Activated CD4-positive, alpha-beta T cell treated with anti-CD3 and anti-CD28 coated beads, Interleukin-2, amount 10 ng/mL, durations not matched to agents 24 days and 14 days (primary cell): ENCODE measurements at regions of chr2 and their contacts with region 1.

Region 1: DNA sequence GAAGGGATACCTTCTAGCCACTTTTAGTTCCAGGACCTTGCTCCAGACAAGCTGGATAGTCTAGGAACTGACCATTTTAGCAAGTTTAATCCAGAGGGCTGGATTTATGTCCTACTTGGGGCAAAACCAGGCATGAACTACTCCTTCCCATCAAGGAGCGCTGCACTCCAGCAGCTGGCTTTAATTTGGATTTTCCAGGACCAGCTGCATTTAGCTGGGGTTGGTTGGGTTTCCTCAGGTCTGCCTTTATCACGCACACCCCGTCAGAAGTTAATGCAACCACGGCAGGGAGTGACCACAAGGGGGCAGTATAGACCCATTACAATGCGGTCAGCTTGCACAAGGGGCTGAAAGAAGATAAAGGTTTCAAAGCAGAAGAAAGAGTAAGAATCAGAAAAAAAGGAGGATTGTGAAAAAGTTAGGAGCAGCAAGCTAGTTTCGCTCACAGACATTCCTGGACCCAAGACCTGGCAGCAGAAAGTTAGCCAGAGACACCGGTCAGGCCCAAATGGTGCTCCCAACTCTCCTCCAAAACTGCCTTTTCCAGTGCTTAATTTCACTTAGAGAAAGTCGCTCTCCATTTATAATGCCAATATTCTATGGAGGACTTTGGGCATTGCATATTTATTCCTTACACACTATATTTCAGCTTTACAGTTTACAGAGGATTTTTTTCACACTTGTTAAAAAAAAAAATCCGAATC is 40.1 kb downstream of the SLC4A1AP start:
- DNase-seq: peak; percentile 95
- H3K4me3 Mint-ChIP-seq: no peak overlapping the region
- H3K27ac Mint-ChIP-seq: no peak overlapping the region
- H3K4me1 Mint-ChIP-seq: peaks cover 13% of the 10 kb centered on the region
- H3K27me3 Mint-ChIP-seq: no peaks in the 10 kb centered on the region

Region 2: DNA sequence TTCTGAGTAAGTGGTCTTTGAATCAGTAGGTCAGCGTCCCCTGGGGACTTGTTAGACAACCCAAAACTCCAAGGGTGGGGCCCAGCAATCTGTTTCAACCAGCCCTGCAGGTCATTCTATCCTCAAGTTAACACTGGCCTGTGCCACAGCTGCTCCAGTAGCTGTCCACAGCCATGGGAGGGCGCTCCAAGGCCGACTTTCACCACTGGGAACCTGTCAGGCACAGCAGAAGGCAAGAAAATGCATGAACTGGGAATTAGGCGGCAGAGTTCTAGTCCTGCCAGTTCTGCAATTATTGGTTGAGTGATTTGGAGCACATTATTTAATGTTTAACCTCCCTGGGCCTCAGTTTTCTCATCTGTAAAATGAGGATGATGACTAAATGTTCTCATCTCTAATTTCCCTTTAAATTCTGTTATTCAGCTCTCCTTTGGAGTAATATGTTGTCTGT is 50.4 kb after region 1 on chr2:
- intact Hi-C with region 1: loop called (anchors 2 kb)
- DNase-seq: peak; percentile 94
- H3K4me3 Mint-ChIP-seq: no peak overlapping the region
- H3K27ac Mint-ChIP-seq: peak overlapping the region; percentile 25
- H3K4me1 Mint-ChIP-seq: peaks cover 8% of the 10 kb centered on the region
- H3K27me3 Mint-ChIP-seq: peaks cover 3% of the 10 kb centered on the region

Region 3: GRCh38 chr2:27771548-27772335 is 68.0 kb after region 1 on chr2 and contains the start of gene MRPL33:
- intact Hi-C with region 1: loop called (anchors 5 kb)
- DNase-seq: peak; percentile 97
- H3K4me3 Mint-ChIP-seq: peak within 1 kb of the TSS; percentile 98
- H3K27ac Mint-ChIP-seq: peak within 1 kb of the TSS; percentile 97
- H3K4me1 Mint-ChIP-seq: peaks cover 23% of the 10 kb centered on the region
- H3K27me3 Mint-ChIP-seq: no peaks in the 10 kb centered on the region
- total RNA-seq, gene MRPL33: 59.0 and 59.6 TPM in 2 replicates

Region 4: DNA sequence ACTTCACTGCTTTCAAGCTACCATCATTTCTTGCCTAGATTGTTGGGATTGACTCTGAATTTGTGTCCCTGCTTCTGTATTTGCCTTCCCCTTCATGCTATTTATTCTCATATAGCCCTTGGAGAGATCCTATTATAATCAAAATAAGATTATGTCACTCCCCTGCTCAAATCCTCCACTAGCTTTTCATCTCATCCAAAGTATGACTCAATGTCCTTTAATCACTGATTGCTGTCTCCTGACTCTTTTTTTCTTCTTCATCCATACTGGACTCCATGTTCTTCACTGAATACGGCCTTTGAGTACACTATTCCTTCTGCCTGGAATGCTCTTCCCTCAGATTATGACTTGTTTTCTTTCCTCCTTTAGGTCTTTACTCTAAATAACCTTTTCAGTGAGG is 181.4 kb after region 1 on chr2:
- intact Hi-C with region 1: no loop called
- DNase-seq: no peak
- H3K4me3 Mint-ChIP-seq: no peak overlapping the region
- H3K27ac Mint-ChIP-seq: no peak overlapping the region
- H3K4me1 Mint-ChIP-seq: peaks cover 16% of the 10 kb centered on the region
- H3K27me3 Mint-ChIP-seq: no peaks in the 10 kb centered on the region

Region 5: GRCh38 chr2:28137221-28137620 is 433.4 kb after region 1 on chr2:
- intact Hi-C with region 1: loop called (anchors 10 kb)
- DNase-seq: no peak
- H3K4me3 Mint-ChIP-seq: no peak overlapping the region
- H3K27ac Mint-ChIP-seq: no peak overlapping the region
- H3K4me1 Mint-ChIP-seq: peaks cover 33% of the 10 kb centered on the region
- H3K27me3 Mint-ChIP-seq: no peaks in the 10 kb centered on the region

Region 6: DNA sequence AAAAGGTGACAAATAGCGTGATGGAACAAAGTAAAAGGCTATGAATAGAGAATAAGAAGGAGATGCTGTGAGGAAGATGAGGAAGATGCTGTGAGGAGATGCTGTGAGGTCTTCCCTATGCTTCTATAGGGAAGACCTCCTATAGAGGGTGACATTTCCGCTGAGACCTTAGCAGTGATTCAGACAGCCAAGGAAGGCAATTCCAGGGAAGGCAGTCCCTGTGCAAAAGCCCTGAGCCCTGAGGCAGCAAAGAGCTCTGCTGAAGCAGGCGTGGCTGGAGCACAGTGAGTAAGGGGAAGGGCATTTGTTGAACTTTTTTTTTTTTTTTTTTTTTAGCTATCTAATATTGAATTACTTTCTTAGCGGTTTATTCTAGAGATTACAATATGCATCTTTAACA is 546.2 kb after region 1 on chr2:
- intact Hi-C with region 1: loop called (anchors 10 kb)
- DNase-seq: no peak
- H3K4me3 Mint-ChIP-seq: no peak overlapping the region
- H3K27ac Mint-ChIP-seq: no peak overlapping the region
- H3K4me1 Mint-ChIP-seq: peaks cover 43% of the 10 kb centered on the region
- H3K27me3 Mint-ChIP-seq: no peaks in the 10 kb centered on the region